ENCODE measurements at regions of chr2 and their contacts with region 1.

Region 1: DNA sequence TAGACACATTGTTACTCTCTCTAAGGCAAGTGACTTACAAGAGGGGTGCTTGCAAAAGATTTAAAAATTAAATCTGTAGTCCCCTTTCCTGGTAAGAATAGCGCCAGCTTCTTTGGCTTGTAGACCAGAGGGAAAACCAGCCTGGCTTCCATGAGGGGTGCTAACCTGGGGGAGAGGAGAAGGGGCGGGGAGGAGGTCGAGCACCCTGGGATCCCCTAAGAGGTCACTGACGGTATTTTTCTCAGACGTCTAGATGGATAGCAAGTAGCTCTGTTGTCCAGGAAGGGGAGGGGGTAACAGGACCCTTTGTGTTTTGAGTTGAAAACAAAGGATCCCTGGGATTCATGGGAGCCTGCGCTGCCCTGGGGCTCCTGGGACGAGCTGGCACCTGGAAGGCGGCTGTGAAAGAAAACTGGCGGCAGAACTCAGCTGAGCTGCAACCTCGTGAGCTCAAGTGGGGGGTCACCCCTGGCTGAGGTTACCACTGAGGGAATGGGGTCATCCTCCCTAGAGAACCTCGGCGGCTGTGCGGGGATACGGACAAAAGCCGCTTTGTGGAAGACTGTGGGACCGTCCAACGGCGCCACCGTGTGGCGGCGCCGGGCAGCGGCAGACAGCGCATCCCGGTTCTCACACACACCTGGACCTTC is 37.8 kb upstream of the MRPL19 start:
- DNase-seq: peak; percentile 80
- H3K4me3 ChIP-seq: peak overlapping the region; percentile 16 to 37; a peak in 3 of 4 replicates
- H3K27ac ChIP-seq: no peak overlapping the region
- H3K4me1 ChIP-seq: peaks cover 8 to 43% of the 10 kb centered on the region in 2 experiments
- H3K27me3 ChIP-seq: no peaks in the 10 kb centered on the region
- CTCF ChIP-seq: peak; percentile 99
- EP300 ChIP-seq: no peak
- RAD21 ChIP-seq: peak; percentile 88

Region 2: GRCh38 chr2:75459565-75460310 is 149.1 kb before region 1 on chr2:
- CTCF ChIA-PET with region 1: interaction called, 238 read pairs
- POLR2A ChIA-PET with region 1: no interaction called
- DNase-seq: no peak
- H3K4me3 ChIP-seq: no peak overlapping the region
- H3K27ac ChIP-seq: no peak overlapping the region
- H3K4me1 ChIP-seq: no peaks in the 10 kb centered on the region; a peak in 1 of 4 replicates
- H3K27me3 ChIP-seq: no peaks in the 10 kb centered on the region
- CTCF ChIP-seq: no peak
- EP300 ChIP-seq: no peak
- RAD21 ChIP-seq: no peak

Region 3: DNA sequence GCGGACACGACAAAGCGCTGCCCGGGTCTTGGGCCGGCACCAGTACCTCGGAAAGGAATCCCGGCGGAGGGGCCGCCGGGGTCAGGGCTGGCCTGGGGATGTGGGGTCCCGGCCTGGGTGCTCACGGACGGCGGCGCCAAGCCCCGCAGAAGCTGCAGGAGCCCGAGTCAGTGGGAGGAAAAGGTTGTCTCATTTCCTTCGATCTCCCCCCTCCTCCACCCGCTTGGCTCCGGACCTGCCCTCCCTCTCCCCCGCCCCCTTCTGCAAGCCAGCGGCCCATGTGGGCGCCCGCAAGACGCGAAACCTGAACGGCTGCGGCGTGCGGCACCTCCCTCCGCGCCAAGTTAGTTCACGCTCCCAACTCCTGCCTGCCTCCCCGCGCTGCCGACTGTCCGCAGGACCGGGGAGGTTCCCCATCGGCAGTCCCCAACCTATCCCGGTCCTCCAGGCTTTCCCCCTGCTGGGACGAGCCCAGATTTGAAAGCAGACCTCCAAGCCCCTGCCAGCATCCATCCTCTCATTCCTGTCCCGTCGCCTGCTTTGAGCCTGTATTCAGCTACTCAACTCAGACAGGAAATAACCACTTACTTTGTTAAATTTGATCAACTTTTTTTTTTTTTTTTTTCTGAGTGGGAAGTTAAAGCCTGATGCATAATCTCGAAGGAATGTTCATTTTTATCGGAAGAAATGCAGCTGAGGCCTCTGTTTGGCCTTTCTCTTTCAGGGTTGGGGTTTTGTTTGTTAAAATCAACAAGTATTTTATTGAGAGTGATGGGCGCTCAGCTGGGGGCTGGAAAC is 47.8 kb before region 1 on chr2 and contains the start of gene EVA1A:
- CTCF ChIA-PET with region 1: interaction called, 33 read pairs
- POLR2A ChIA-PET with region 1: no interaction called
- DNase-seq: peak; percentile 66
- H3K4me3 ChIP-seq: peak within 1 kb of the TSS; percentile 58 to 92
- H3K27ac ChIP-seq: peak within 1 kb of the TSS; percentile 72 to 95
- H3K4me1 ChIP-seq: peaks cover 8 to 34% of the 10 kb centered on the region in 2 experiments
- H3K27me3 ChIP-seq: no peaks in the 10 kb centered on the region
- CTCF ChIP-seq: no peak
- EP300 ChIP-seq: no peak
- RAD21 ChIP-seq: no peak
- polyA plus RNA-seq, gene EVA1A: 79.0 and 93.0 TPM in 2 replicates

Region 4: GRCh38 chr2:75587954-75588587 is 20.7 kb before region 1 on chr2:
- CTCF ChIA-PET with region 1: interaction called, 20 read pairs
- POLR2A ChIA-PET with region 1: no interaction called
- DNase-seq: no peak
- H3K4me3 ChIP-seq: peak overlapping the region; percentile 2 to 21; a peak in 2 of 4 replicates
- H3K27ac ChIP-seq: peak overlapping the region; percentile 80 to 93; a peak in 3 of 4 replicates
- H3K4me1 ChIP-seq: peaks cover 0 to 36% of the 10 kb centered on the region in 2 experiments; a peak in 3 of 4 replicates
- H3K27me3 ChIP-seq: no peaks in the 10 kb centered on the region
- CTCF ChIP-seq: no peak
- EP300 ChIP-seq: peak in 1 of 2 experiments; percentile 50; a peak in 1 of 4 replicates
- RAD21 ChIP-seq: no peak

Region 5: DNA sequence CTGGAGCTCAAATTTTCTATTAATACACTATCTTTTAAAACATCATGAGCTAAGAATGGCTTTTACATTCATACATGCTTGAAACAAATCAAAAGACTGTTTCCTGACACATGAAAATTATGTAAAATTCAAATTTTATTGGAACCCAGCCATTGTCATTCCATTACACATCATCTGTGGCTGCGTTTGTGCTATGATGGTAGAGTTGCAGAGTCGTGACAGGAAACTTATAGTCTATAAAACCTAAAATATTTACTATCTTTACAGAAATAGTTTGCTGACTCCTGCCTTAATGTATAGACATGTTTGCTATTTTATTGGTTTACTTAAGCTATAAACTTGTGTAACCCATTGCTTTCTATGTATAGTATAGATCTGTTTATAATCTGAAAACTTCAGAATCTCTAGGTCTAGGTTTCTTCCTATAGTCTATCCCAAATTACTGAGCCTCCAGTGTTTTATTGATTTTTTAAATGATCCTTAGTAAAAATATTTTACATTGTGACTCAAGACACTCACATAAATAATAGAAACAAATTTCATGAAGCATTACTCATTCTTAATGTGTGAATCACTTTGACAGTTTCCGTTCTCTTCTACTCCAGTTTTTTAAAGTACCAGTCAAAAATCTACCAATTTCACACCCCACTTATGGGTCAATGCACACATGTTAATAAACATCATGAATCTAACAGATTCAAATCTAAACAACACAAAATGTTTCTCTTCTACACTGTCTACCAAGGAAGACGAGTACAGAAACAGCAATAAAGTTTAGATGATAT is 11.3 kb after region 1 on chr2:
- CTCF ChIA-PET with region 1: interaction called, 23 read pairs
- POLR2A ChIA-PET with region 1: no interaction called
- DNase-seq: no peak
- H3K4me3 ChIP-seq: no peak overlapping the region
- H3K27ac ChIP-seq: peak overlapping the region in 1 of 2 experiments; percentile 52; a peak in 2 of 4 replicates
- H3K4me1 ChIP-seq: no peaks in the 10 kb centered on the region; a peak in 1 of 4 replicates
- H3K27me3 ChIP-seq: no peaks in the 10 kb centered on the region
- CTCF ChIP-seq: no peak
- EP300 ChIP-seq: peak in 1 of 2 experiments; percentile 9; a peak in 1 of 4 replicates
- RAD21 ChIP-seq: no peak

Region 6: DNA sequence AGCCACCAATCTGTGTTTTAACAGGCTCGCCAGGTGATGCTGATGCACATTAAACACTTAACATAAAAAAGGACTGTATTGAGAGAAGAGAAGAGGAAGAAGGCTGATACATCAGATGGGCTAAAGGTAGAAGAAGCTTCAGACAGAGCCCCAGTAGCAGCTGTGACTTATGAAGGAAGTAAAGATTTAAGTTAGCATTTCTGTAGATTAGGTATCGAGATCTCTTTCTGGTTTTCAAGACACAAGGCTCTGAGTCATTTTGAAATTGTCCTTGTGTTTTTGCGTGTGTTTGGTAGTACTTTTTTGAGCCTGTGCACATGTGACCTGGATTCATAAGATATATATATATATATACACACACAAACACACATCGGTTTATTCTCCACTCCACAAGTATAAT is 142.6 kb after region 1 on chr2:
- CTCF ChIA-PET with region 1: no interaction called
- POLR2A ChIA-PET with region 1: no interaction called
- DNase-seq: no peak
- H3K4me3 ChIP-seq: no peak overlapping the region
- H3K27ac ChIP-seq: no peak overlapping the region
- H3K4me1 ChIP-seq: no peaks in the 10 kb centered on the region
- H3K27me3 ChIP-seq: no peaks in the 10 kb centered on the region
- CTCF ChIP-seq: no peak
- EP300 ChIP-seq: no peak
- RAD21 ChIP-seq: no peak

Measured in SK-N-SH (cell line).